ENCODE measurements at regions of chr14 and their contacts with region 1.

Region 1: DNA sequence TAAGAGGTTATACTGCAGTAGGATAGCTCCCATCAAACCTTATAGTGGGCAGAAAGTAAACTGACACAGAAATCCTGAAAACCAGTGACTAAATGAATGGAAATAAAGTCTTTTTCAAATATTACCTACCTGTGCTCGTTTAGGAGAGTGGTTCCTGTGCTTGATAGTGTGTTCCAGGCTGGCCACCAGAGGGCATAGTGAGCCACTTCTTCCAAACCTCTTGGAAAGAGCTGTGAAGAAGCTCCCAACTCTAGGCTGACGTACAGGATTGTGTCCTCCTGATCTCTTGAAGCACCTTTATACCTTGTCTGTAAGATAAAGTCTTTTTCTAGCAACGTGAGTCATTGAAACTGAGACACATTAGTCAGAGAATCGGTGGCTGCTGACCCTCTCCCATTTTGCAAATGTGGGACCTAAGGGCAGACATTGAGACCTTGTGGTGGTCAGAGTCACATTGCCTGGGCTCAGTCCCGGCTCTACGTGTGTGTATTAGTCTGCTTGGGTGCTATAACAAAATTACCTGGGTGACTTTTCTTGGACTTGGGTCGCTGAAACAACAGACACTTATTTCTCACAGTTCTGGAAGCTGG is 17.6 kb downstream of the TDP1 start:
- H3K4me3 ChIP-seq: no peak overlapping the region
- H3K27ac ChIP-seq: no peak overlapping the region
- H3K4me1 ChIP-seq: no peaks in the 10 kb centered on the region
- CTCF ChIP-seq: peak; percentile 62

Region 2: DNA sequence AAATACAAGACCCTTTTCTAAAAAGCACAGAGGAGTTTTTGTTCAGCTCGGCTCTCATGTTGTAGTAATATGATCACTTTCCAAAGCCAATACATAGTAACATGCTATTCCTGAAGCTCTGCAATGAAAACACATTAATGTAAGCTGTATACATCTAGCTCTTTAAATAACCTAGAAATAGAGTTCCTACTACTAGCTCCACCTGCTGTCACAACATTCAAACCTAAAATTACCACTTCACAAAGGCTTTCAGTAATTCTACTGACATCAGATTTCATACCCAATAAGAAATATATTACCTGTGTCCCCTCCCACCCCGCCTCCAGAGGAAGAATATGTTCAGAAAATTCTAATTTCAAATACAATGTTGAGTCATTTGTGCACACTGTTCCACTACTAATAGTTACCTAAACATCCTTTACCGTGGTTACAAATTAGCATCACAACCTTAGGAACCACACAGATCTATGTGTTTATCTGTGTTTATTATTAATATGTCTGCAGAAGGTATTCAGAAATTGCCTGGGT is 36.6 kb before region 1 on chr14:
- CTCF ChIA-PET with region 1: interaction called, 10 read pairs
- POLR2A ChIA-PET with region 1: no interaction called
- H3K4me3 ChIP-seq: no peak overlapping the region
- H3K27ac ChIP-seq: no peak overlapping the region
- H3K4me1 ChIP-seq: peaks cover 4% of the 10 kb centered on the region
- CTCF ChIP-seq: no peak

Region 3: DNA sequence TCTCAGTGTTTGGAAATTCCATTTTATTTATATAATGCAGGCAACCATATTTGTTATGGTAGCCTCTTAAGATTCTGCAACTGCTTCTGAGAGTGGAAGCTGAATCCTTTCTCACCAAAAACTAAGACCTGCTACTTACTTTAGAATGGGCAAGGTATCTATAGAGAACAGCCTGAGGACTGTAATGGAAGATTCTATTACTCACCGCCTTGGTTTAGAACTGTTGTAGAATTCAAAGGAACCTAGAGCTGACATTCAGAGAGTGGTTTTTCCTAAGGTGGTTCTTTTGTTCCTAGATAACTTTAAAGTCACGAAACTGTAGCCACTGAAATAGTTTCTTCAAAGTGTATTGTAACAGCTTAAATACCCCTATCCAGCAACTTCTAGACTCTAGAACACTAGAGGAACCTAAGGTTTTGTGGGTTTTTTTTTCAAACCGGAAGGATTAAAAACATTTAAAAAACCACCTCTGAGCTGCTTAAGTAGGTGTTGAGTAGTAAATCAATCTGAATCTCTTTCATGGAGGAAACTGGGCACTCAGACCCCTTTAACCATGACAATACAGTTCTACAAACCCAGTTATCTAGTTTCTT is 13.4 kb before region 1 on chr14:
- CTCF ChIA-PET with region 1: interaction called, 29 read pairs
- POLR2A ChIA-PET with region 1: interaction called, 4 read pairs
- H3K4me3 ChIP-seq: no peak overlapping the region
- H3K27ac ChIP-seq: no peak overlapping the region
- H3K4me1 ChIP-seq: no peaks in the 10 kb centered on the region
- CTCF ChIP-seq: no peak

Region 4: DNA sequence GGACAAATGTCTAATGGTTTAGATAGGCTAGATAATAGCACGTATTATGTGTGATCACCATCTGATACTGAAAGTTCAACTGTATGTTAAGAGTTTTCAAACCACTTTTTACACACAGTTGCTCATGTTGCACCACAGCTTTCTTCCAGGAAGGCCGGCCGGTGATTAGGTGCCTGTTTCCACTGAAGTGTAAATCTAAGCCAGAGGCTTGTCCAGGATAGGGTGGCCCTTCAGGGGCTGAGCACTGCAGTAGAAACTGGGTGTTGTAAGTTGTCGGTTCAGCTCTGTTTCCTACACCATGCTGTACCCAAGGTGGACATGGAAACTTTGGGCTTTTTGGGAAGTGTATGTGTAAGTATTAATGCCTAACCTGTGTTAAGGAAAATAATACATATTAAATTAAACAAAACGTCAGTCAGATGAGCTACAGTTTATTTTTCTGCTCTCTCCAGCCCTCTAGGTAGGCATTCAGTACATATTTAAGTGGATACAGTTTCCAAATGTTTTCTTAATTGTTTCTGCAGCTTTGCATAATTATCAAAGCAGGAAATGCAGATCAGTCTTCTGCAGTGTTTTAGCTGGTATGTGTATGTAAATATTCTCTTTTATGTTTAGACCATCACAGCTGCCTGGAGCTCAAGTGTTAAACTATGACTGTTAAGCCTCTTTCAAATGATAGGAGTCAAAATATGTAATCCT is 13.3 kb after region 1 on chr14:
- CTCF ChIA-PET with region 1: interaction called, 12 read pairs
- POLR2A ChIA-PET with region 1: no interaction called
- H3K4me3 ChIP-seq: no peak overlapping the region
- H3K27ac ChIP-seq: no peak overlapping the region
- H3K4me1 ChIP-seq: no peaks in the 10 kb centered on the region
- CTCF ChIP-seq: no peak

Region 5: GRCh38 chr14:90060312-90060964 is 87.1 kb after region 1 on chr14:
- CTCF ChIA-PET with region 1: interaction called, 13 read pairs
- POLR2A ChIA-PET with region 1: no interaction called
- H3K4me3 ChIP-seq: peak overlapping the region; percentile 50
- H3K27ac ChIP-seq: no peak overlapping the region
- H3K4me1 ChIP-seq: no peaks in the 10 kb centered on the region; the same call in 1 of the 2 replicates
- CTCF ChIP-seq: peak; percentile 99

Region 6: GRCh38 chr14:90153429-90153828 is 180.1 kb after region 1 on chr14:
- CTCF ChIA-PET with region 1: no interaction called
- POLR2A ChIA-PET with region 1: no interaction called
- H3K4me3 ChIP-seq: no peak overlapping the region
- H3K27ac ChIP-seq: no peak overlapping the region
- H3K4me1 ChIP-seq: no peaks in the 10 kb centered on the region
- CTCF ChIP-seq: no peak

Region 7: DNA sequence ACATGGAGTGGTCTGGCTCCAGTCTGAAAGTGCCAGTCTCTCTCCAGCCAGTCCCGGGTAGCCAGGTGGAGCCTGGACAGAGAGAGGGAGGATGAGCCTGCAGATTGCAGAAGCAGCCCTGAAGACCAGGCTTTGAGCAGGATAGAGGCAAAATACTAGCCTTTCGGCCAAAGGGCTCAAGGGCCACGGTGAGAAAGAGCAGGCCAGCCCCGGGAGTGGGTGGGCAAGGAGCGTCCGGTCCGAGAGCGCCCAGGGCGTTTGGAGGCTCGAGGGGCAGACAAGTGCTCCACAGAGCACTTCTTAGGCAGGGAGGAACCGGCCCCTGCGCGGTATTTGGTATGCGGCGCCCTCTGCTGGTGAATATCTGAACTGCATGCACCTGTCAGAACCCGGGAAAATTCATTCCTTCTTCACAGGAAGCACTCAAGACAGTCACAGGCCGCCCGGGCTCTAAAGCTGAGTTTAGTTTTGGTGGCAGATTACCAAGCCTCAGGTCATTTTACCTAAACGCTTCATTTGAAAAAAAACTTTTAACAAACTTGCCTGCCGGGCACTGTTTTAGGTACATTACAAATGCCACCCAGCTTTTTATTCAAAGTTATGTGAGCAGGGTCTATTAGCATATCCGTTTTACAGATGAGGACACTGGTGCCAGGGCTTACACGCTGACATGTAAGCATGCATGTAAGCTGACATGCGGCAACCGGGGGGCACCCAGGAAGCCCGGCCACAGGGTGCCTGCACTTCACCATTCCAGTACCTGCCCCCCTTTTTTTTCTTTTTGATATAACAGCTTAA is 262.0 kb after region 1 on chr14:
- CTCF ChIA-PET with region 1: interaction called, 77 read pairs
- POLR2A ChIA-PET with region 1: no interaction called
- H3K4me3 ChIP-seq: no peak overlapping the region
- H3K27ac ChIP-seq: no peak overlapping the region
- H3K4me1 ChIP-seq: no peaks in the 10 kb centered on the region
- CTCF ChIP-seq: peak; percentile 79